ENCODE measurements at regions of chr1 and their contacts with region 1.

Region 1: DNA sequence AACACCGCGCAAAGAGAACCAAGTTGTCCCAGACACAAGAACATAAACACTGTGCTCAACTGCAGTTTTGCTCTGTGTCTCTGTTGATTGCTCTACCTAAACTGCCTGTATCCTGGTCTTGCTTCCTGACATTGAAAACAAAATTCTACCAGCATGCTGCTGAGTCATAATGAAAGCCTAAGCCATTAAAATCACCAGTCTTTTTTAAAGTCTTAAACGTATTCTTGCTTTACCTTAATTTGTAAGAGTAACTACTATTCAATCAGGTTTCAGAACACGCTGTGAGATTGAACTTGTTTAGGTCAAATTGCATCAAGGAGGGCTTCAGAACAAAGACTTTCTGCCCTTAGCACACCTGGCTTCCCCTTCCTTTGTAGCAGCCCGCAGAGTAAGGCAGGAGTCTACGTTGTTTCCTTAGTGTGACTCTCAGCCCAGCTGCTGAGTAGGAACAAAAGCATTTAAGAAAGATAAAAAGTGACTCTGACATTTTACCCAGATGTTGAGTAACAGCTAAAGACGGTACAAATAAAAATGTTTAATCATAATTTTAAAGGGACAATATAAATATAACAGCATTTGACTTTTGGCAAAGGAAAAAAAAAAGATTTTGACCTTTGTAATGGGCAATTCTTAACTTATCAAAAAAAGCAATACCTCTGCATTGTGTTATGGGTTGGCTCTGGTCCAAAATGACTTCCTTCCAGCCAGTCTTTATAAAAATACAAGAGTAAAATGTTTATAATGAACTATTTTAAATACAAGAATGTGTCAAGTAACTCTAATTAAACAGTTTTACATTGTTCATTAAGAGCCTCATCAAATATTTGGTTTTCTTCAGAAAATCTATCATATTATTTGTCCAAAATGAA is 186.9 kb upstream of the ADGRL4 start:
- DNase-seq: peak; percentile 74
- H3K4me3 ChIP-seq: no peak overlapping the region
- H3K27ac ChIP-seq: peak overlapping the region; percentile 55
- H3K4me1 ChIP-seq: peaks cover 10% of the 10 kb centered on the region
- H3K27me3 ChIP-seq: no peaks in the 10 kb centered on the region
- CTCF ChIP-seq: no peak

Region 2: DNA sequence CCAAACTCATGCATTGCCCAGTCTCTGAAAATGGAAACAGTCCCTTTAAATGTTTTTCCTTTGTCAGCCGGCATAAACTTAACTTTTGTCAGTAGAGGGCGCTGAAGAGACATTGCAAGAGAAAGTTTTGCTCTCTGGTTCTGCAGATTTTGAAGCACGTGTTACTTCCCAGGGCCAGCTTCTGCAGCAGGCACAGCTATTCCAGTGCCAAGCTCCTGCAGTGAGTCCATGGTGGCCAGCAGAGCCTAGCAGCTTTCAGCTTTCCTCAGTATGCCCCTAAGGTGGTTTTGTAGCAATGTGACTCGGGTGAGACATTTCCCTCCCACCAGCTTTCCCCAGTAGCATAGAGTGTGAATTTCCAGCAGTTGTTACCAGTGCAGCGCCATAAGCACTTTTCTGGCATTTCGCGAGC is 575.8 kb before region 1 on chr1:
- CTCF ChIA-PET with region 1: no interaction called
- dilution Hi-C with region 1: no loop called
- in situ Hi-C with region 1: no loop called
- intact Hi-C with region 1: loop called (anchors 2 kb)
- DNase-seq: peak; percentile 74
- H3K4me3 ChIP-seq: no peak overlapping the region
- H3K27ac ChIP-seq: no peak overlapping the region
- H3K4me1 ChIP-seq: peaks cover 16% of the 10 kb centered on the region
- H3K27me3 ChIP-seq: no peaks in the 10 kb centered on the region
- CTCF ChIP-seq: peak; percentile 77 to 85

Region 3: GRCh38 chr1:78688701-78689100 is 504.7 kb before region 1 on chr1:
- CTCF ChIA-PET with region 1: no interaction called
- dilution Hi-C with region 1: no loop called
- in situ Hi-C with region 1: no loop called
- intact Hi-C with region 1: loop called (anchors 1 kb)
- DNase-seq: peak; percentile 29
- H3K4me3 ChIP-seq: no peak overlapping the region
- H3K27ac ChIP-seq: no peak overlapping the region
- H3K4me1 ChIP-seq: peaks cover 11% of the 10 kb centered on the region
- H3K27me3 ChIP-seq: no peaks in the 10 kb centered on the region
- CTCF ChIP-seq: peak in 1 of 2 donors; percentile 43

Region 4: DNA sequence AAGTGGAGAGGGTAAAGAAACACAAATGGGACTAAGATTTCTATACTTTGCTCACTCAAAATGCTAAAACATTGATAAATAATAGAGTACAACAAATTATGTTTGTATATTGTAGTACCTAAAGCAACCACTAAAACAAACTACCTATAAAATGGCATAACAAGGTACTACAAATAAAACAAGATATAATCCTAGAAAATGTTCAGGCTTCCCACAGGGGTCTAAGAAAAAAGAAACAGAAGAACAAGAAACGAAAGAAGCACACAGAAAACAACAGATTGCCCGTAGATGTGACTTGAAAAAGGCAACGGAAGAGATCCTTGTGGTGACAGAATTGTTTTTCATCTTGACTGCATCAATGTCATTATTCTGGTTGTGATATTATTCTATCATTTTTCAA is 123.6 kb before region 1 on chr1:
- CTCF ChIA-PET with region 1: interaction called, 21 read pairs
- dilution Hi-C with region 1: no loop called
- in situ Hi-C with region 1: no loop called
- intact Hi-C with region 1: no loop called
- DNase-seq: no peak
- H3K4me3 ChIP-seq: no peak overlapping the region
- H3K27ac ChIP-seq: no peak overlapping the region
- H3K4me1 ChIP-seq: no peaks in the 10 kb centered on the region
- H3K27me3 ChIP-seq: no peaks in the 10 kb centered on the region
- CTCF ChIP-seq: no peak

Measured in mammary epithelial cell (primary cell).